ENCODE measurements at regions of chr17 and their contacts with region 1.

Region 1: DNA sequence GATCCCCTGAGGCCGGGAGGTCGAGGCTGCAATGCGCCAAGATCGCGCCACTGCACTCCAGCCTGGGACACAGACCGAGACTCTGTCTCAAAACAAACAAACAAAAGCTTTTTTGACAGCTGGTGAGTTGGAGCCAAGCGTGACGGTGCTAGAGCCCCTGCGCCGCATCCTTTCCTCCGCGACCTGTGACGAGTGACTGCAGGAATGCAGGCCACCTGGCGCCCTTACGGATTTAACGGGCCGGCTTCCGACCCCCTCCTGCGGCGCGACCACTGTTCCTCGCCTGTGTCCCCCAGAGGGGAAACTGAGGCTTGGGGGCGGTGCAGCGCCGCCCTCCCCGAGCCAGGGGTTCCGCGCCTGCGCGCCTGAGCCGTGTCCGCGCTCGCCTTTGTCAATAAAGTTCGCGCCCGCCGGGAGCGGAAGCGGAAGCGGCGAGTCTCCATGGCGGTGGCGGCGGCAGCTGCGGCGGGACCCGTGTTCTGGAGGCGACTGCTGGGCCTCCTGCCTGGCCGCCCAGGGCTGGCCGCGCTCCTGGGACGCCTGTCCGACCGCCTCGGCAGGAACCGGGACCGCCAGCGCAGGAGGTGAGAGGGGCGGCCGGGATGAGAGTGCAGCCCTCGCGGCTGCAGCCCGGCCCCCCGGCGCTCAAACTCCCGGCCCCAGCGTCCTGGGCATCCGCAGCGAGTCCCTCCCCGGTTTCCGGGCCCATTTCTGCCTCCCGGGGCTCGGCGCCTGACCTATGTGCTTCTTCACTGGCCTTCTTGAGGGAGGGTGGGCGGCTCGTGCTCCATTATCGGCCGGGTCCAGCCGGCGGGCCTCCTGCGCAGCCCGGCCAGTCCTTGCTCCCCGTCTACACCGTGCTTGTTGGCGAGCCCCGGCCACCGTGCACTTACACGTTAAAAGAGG is at the start of gene PGS1:
- DNase-seq: no peak
- ATAC-seq: peak; percentile 71
- H3K4me3 ChIP-seq: peak within 1 kb of the TSS; percentile 91
- H3K27ac ChIP-seq: peak within 1 kb of the TSS; percentile 76
- H3K4me1 ChIP-seq: peaks cover 42% of the 10 kb centered on the region
- H3K27me3 ChIP-seq: no peaks in the 10 kb centered on the region
- CTCF ChIP-seq: no peak
- EP300 ChIP-seq: 0 out of 4 replicates have a peak, but pooled peaks of 1 of the 2 experiments have one; percentile 17
- POLR2A ChIP-seq: peak; percentile 86
- RAD21 ChIP-seq: no peak
- polyA plus RNA-seq, gene PGS1: 1.3 to 1.9 TPM

Region 2: GRCh38 chr17:78365561-78366108 is 12.8 kb before region 1 on chr17:
- CTCF ChIA-PET with region 1: interaction called, 9 read pairs
- POLR2A ChIA-PET with region 1: interaction called, 16 read pairs
- RAD21 ChIA-PET with region 1: interaction called, 12 read pairs
- SMC1A ChIA-PET with region 1: interaction called, 4 read pairs
- in situ Hi-C with region 1: no loop called
- intact Hi-C with region 1: loop called (anchors 2 kb)
- DNase-seq: no peak
- ATAC-seq: no peak
- H3K4me3 ChIP-seq: no peak overlapping the region
- H3K27ac ChIP-seq: no peak overlapping the region
- H3K4me1 ChIP-seq: peaks cover 23% of the 10 kb centered on the region
- H3K27me3 ChIP-seq: 0 out of 4 replicates have a peak, but pooled peaks cover 0 to 2% of the 10 kb centered on the region in 2 experiments
- CTCF ChIP-seq: no peak
- EP300 ChIP-seq: no peak
- POLR2A ChIP-seq: no peak
- RAD21 ChIP-seq: no peak

Measured in GM12878 (cell line).